Aorta (tissue), 5 donors: ENCODE measurements at regions of chr11 and their contacts with region 1.

Region 1: GRCh38 chr11:26841818-26842473 is 120.1 kb upstream of the SLC5A12 start:
- DNase-seq: no peak
- ATAC-seq: peak; percentile 72
- H3K4me3 ChIP-seq: no peak overlapping the region
- H3K27ac ChIP-seq: peak overlapping the region; percentile 94 to 97
- H3K4me1 ChIP-seq: peaks cover 8 to 10% of the 10 kb centered on the region in 2 donors
- H3K27me3 ChIP-seq: no peaks in the 10 kb centered on the region

Region 2: GRCh38 chr11:26761361-26761809 is 80.6 kb before region 1 on chr11:
- intact Hi-C with region 1: loop called (anchors 5 kb)
- DNase-seq: no peak
- ATAC-seq: no peak
- H3K4me3 ChIP-seq: no peak overlapping the region
- H3K27ac ChIP-seq: no peak overlapping the region
- H3K4me1 ChIP-seq: peaks cover 0 to 7% of the 10 kb centered on the region in 2 donors
- H3K27me3 ChIP-seq: no peaks in the 10 kb centered on the region

Region 3: DNA sequence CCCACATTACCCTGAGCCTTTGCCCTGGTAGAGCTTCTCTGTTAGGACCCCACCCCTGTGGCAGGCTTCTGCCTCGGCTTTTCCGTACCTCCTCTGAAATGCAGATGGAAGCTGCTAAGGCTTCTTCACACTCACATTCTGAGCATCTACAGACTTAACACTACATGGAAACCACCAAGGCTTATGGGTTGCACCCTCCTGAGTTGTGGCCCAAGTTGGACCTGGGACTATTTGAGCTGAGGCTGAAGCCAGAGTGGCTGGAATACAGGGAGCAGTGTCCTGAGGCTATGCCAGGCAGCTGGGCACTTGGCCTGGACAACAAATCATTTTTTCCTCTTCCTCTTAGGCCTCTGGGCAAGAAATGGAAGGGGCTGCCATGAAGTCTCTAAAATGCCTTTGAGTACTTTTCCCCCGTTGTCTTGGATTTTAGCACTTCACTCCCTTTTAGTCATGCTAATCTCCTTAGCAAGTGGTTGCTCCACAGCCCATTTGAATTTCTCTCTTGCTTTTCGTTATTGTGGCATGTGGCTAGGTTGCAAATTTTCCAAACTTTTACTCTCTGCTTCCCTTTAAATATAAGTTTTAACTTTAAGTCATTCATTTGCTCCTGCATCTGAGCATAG is 37.1 kb after region 1 on chr11:
- intact Hi-C with region 1: no loop called
- DNase-seq: no peak
- ATAC-seq: no peak
- H3K4me3 ChIP-seq: no peak overlapping the region
- H3K27ac ChIP-seq: no peak overlapping the region
- H3K4me1 ChIP-seq: no peaks in the 10 kb centered on the region
- H3K27me3 ChIP-seq: no peaks in the 10 kb centered on the region

Region 4: DNA sequence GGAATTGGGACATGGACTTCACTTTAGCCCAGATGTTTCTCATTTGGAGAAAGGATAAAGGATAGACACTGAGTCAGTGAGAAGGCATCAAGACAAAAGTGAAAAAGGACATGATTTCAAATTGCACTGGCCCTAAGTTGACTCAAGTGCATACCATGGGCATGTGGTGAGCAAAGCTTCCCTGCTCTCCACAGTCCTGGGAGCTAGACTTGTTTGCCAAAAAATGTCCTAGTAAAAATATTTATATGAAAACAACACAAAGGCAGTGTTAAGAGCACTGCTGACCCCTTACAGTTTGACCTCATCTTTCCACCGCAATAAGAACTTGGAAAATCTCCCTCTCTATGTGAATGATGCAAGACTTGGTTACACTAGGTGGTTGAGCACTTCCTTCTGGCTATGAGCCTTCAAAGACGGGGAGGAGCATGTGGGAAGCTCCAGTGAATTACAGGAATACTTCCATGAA is 105.5 kb after region 1 on chr11:
- intact Hi-C with region 1: loop called (anchors 5 kb)
- DNase-seq: peak in 1 of 2 donors; percentile 64
- ATAC-seq: peak; percentile 93
- H3K4me3 ChIP-seq: no peak overlapping the region
- H3K27ac ChIP-seq: peak overlapping the region in 1 of 2 donors; percentile 48
- H3K4me1 ChIP-seq: peaks cover 2 to 16% of the 10 kb centered on the region in 2 donors
- H3K27me3 ChIP-seq: no peaks in the 10 kb centered on the region

Region 5: DNA sequence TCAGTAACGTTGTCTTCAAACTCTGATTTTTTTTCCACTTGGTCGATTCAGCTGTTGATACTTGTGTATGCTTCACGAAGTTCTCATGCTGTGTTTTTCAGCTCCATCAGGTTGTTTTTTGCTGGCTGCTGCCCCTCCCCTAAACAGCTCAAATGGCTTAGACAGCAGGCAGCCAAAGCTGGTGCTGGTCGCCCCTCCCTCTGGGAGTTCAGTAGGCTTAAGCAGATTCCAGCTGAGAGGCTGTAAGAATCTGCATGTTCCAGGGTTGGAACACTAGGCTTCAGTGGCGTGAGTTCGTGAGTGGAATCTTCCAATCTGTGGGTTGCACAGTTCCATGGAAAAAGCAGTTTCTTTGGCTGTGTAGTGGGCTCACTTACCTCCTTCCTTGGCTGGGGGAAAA is 141.7 kb after region 1 on chr11:
- intact Hi-C with region 1: no loop called
- DNase-seq: no peak
- ATAC-seq: no peak
- H3K4me3 ChIP-seq: no peak overlapping the region
- H3K27ac ChIP-seq: no peak overlapping the region
- H3K4me1 ChIP-seq: peaks cover 5 to 17% of the 10 kb centered on the region in 2 donors
- H3K27me3 ChIP-seq: no peaks in the 10 kb centered on the region